B cell (primary cell): ENCODE measurements at regions of chr3 and their contacts with region 1.

Region 1: GRCh38 chr3:167740961-167741587 is 5.6 kb downstream of the SERPINI1 start:
- DNase-seq: peak; percentile 60
- ATAC-seq: peak; percentile 90
- H3K4me3 ChIP-seq: no peak overlapping the region
- H3K4me3 Mint-ChIP-seq: no peak overlapping the region
- H3K27ac ChIP-seq: no peak overlapping the region
- H3K27ac Mint-ChIP-seq: no peak overlapping the region
- H3K4me1 ChIP-seq: peaks cover 4 to 13% of the 10 kb centered on the region in 2 donors
- H3K4me1 Mint-ChIP-seq: peaks cover 20% of the 10 kb centered on the region
- H3K27me3 ChIP-seq: no peaks in the 10 kb centered on the region
- H3K27me3 Mint-ChIP-seq: no peaks in the 10 kb centered on the region
- CTCF ChIP-seq: peak; percentile 62

Region 2: DNA sequence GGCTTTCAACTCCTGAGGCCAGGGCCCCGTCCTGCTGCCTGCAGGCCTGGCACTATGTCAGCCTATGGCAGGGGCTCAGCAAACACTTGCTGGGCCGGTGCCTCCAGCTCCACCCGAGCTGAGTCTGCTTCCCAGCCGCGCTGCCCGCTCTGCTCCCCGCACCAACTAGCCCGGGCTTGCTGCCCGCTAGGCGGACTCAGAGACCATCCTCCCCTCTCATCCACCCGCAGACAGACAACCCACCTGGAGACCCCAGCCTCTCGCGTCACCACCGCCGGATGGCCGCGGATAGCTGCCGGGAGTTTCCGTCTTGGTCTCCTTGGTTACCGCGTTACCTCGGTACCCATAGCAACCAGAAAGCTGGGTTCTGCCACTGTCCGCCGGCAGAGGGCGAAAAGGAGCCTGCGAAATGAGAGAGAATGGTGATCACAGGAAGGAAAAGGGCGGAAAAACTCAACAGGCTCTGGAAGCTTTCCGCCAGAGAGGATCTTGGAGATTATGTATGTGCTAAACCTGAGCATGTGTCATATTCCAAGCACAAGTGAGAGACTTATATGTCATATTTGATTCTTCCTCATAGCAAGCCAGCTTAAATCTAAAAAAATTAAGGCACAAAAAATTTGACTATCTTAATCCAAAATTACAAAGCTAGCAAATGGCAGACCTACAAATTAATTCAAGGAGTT is 360.9 kb before region 1 on chr3 and contains the start of gene ZBBX:
- CTCF ChIA-PET with region 1: interaction called, 25 read pairs
- POLR2A ChIA-PET with region 1: no interaction called
- intact Hi-C with region 1: no loop called
- DNase-seq: peak; percentile 92
- ATAC-seq: peak; percentile 95
- H3K4me3 ChIP-seq: peak within 1 kb of the TSS in 4 of 5 experiments; percentile 33 to 56 (median 48)
- H3K4me3 Mint-ChIP-seq: peak within 1 kb of the TSS; percentile 89
- H3K27ac ChIP-seq: peak within 1 kb of the TSS; percentile 13 to 45
- H3K27ac Mint-ChIP-seq: peak within 1 kb of the TSS; percentile 69
- H3K4me1 ChIP-seq: peaks cover 7 to 8% of the 10 kb centered on the region in 2 donors
- H3K4me1 Mint-ChIP-seq: peaks cover 8% of the 10 kb centered on the region
- H3K27me3 ChIP-seq: peaks cover 0 to 3% (median 0%) of the 10 kb centered on the region in 4 experiments
- H3K27me3 Mint-ChIP-seq: peaks cover 5% of the 10 kb centered on the region
- CTCF ChIP-seq: peak; percentile 91
- total RNA-seq, gene ZBBX: not detected in 2 replicates